Heart right ventricle (tissue), 16 donors: ENCODE measurements at regions of chr2 and their contacts with region 1.

Region 1: GRCh38 chr2:37196320-37197195 is at the start of gene CEBPZOS:
- DNase-seq: peak; percentile 86 to 88
- ATAC-seq: peak; percentile 93 to 96 (median 94)
- H3K4me3 ChIP-seq: peak within 1 kb of the TSS; percentile 67 to 94 (median 80)
- H3K27ac ChIP-seq: peak within 1 kb of the TSS; percentile 33 to 94 (median 88)
- H3K4me1 ChIP-seq: peaks cover 2 to 26% (median 17%) of the 10 kb centered on the region in 9 donors
- H3K27me3 ChIP-seq: no peaks in the 10 kb centered on the region
- CTCF ChIP-seq: no peak
- total RNA-seq, gene CEBPZOS: 54.2 to 68.2 (median 60.3) TPM

Region 2: DNA sequence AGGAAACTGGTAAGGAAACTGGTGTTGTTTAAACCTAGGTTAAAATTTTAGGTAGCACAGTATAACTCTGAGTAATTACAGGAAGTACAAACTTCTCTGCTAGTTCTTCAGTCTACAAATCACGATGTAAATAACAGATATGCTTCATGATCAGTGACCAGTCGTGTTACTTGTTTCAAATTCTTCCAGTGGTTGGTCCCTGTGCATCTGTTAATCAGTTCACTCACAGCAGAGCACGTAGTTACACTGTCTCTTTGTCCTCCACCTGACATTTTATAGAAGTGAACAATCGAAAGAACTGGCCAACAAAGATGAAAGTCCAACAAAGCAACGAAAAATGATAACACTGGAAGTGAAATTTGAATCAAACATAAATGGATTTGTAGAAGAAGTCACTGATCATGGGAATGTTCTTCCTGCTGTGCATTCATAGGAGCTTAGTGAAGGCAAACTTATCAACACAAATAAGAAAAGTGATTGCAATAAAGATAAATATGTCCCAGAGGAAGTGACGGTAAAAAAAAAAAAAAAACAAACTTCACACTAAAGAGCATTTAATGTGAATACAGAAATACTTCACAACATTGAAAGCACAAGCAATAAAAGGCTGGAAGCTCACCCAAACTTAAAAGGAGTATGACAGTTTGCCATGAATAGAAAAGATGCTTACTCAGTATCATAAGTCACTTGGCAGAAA is 46.8 kb before region 1 on chr2:
- intact Hi-C with region 1: loop called in 1 of 10 experiments (anchors 5 kb)
- DNase-seq: no peak
- ATAC-seq: no peak
- H3K4me3 ChIP-seq: no peak overlapping the region
- H3K27ac ChIP-seq: no peak overlapping the region
- H3K4me1 ChIP-seq: peaks cover 0 to 48% (median 10%) of the 10 kb centered on the region in 9 donors
- H3K27me3 ChIP-seq: no peaks in the 10 kb centered on the region
- CTCF ChIP-seq: no peak

Region 3: GRCh38 chr2:37156857-37157714 is 39.5 kb before region 1 on chr2 and contains the start of gene EIF2AK2:
- intact Hi-C with region 1: loop called in 2 of 10 experiments (anchors 5 kb)
- DNase-seq: peak; percentile 83 to 88
- ATAC-seq: peak; percentile 84 to 95 (median 89)
- H3K4me3 ChIP-seq: peak within 1 kb of the TSS; percentile 69 to 98 (median 90)
- H3K27ac ChIP-seq: peak within 1 kb of the TSS; percentile 85 to 96 (median 94)
- H3K4me1 ChIP-seq: peaks cover 4 to 48% (median 16%) of the 10 kb centered on the region in 9 donors
- H3K27me3 ChIP-seq: no peaks in the 10 kb centered on the region
- CTCF ChIP-seq: no peak
- total RNA-seq, gene EIF2AK2: 18.6 to 31.1 (median 24.2) TPM

Region 4: DNA sequence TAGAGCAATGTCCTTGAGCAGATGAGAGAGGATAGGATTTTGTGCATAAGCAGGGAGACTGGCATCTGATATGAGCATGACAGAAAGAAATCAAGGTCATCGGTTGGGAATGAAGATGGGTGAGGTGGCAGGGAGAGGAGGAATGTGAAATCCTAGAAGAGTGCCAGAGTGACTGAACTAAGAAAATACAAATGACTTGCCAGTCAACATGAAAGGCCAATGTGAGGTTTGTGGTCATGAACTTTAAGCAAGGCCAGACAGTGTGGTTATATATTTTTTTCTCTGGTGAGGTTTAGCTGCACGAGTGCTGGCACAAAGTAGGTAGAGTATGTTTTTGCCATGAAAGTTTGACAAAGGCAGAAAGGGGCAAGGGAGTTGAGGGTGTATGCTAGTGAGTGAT is 169.1 kb after region 1 on chr2:
- intact Hi-C with region 1: no loop called
- DNase-seq: no peak
- ATAC-seq: no peak
- H3K4me3 ChIP-seq: no peak overlapping the region
- H3K27ac ChIP-seq: no peak overlapping the region
- H3K4me1 ChIP-seq: peaks cover 0 to 5% (median 0%) of the 10 kb centered on the region in 9 donors
- H3K27me3 ChIP-seq: no peaks in the 10 kb centered on the region
- CTCF ChIP-seq: no peak

Region 5: GRCh38 chr2:38535744-38536506 is 1339.4 kb after region 1 on chr2:
- intact Hi-C with region 1: no loop called
- DNase-seq: peak; percentile 79 to 87
- ATAC-seq: peak; percentile 94 to 97 (median 96)
- H3K4me3 ChIP-seq: peak overlapping the region; percentile 32 to 63 (median 54)
- H3K27ac ChIP-seq: peak overlapping the region in 2 of 10 donors; percentile 20 to 47
- H3K4me1 ChIP-seq: peaks cover 0 to 14% (median 6%) of the 10 kb centered on the region in 9 donors
- H3K27me3 ChIP-seq: peaks cover 0 to 5% (median 0%) of the 10 kb centered on the region in 7 donors
- CTCF ChIP-seq: peak; percentile 86 to 98 (median 93)